HEK293T (cell line): ENCODE measurements at regions of chr17 and their contacts with region 1.

Region 1: DNA sequence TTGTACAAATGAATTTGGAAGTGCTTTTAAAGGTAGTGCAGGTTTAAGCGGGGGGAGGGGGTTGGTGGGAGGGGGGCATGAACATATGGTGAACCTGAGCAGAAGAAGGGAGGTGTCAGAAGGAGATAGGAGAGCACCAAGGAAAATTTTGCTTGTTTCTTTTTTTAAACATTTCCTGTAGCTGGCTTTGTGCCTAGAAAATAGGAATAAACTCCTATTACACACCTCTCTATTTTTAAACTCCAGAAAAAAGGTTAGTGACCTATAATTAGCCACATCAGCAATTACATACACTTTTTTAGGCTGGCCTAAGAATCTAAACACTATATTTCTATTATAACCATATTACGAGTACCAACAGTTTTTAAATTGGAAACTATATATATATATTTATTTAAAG is 159.1 kb downstream of the SKAP1 start:
- DNase-seq: no peak

Region 2: GRCh38 chr17:47862621-47863440 is 408.1 kb before region 1 on chr17:
- CTCF ChIA-PET with region 1: interaction called, 12 read pairs
- POLR2A ChIA-PET with region 1: no interaction called
- DNase-seq: no peak

Region 3: DNA sequence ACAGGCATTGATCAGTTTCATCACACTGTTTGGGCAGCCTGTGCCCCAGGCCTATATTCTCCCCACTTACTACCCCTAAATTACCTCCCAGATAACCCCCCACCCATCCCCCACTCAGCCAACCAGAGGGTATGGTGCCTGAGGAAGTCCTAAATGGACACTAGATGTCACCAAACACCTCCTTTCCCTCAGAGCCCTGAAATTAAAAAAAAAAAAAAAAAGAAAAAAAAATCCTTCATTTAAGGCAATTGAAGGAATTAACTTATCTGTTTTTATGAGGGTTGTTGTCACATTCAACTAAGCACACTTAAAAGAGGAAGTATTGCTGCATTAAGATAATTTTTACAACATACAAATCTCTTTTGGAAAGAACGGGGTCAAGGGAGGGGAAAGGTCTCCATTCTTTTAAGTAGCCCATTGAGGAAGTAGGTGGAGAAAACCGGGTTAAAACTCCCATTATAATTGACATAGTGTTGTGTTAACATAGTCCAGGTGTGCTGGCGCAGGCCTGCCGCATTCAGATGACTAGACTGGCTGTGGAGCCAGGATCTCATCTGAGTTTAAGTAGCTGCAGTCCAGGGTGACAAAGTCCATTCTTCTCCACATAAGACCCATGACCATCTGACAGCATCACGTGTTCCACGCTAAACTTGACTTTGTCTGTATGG is 117.1 kb before region 1 on chr17:
- CTCF ChIA-PET with region 1: no interaction called
- POLR2A ChIA-PET with region 1: no interaction called
- DNase-seq: peak; percentile 63

Region 4: GRCh38 chr17:48250949-48251348 is 19.9 kb before region 1 on chr17:
- CTCF ChIA-PET with region 1: no interaction called
- POLR2A ChIA-PET with region 1: no interaction called
- DNase-seq: no peak